ENCODE measurements at regions of chrX and their contacts with region 1.

Region 1: GRCh38 chrX:130097507-130098209 is 12.6 kb downstream of the ELF4 start:
- DNase-seq: peak; percentile 74 to 84
- H3K4me3 ChIP-seq: no peak overlapping the region; the same call in 1 of the 2 replicates
- H3K27ac ChIP-seq: peak overlapping the region; percentile 57
- H3K4me1 ChIP-seq: peaks cover 74% of the 10 kb centered on the region
- H3K27me3 ChIP-seq: no peaks in the 10 kb centered on the region
- CTCF ChIP-seq: no peak

Region 2: GRCh38 chrX:130039847-130040246 is 57.8 kb before region 1 on chrX:
- CTCF ChIA-PET with region 1: no interaction called
- POLR2A ChIA-PET with region 1: no interaction called
- intact Hi-C with region 1: no loop called
- DNase-seq: no peak
- H3K4me3 ChIP-seq: no peak overlapping the region
- H3K27ac ChIP-seq: no peak overlapping the region
- H3K4me1 ChIP-seq: no peaks in the 10 kb centered on the region
- H3K27me3 ChIP-seq: no peaks in the 10 kb centered on the region
- CTCF ChIP-seq: no peak

Region 3: GRCh38 chrX:130120746-130121504 is 23.3 kb after region 1 on chrX:
- CTCF ChIA-PET with region 1: interaction called, 14 read pairs
- POLR2A ChIA-PET with region 1: no interaction called
- intact Hi-C with region 1: no loop called
- DNase-seq: peak; percentile 71 to 79
- H3K4me3 ChIP-seq: peak overlapping the region; percentile 51; the same call in 1 of the 2 replicates
- H3K27ac ChIP-seq: peak overlapping the region; percentile 66
- H3K4me1 ChIP-seq: peaks cover 75% of the 10 kb centered on the region
- H3K27me3 ChIP-seq: no peaks in the 10 kb centered on the region
- CTCF ChIP-seq: peak; percentile 75

Region 4: GRCh38 chrX:130139474-130140201 is 42.0 kb after region 1 on chrX:
- CTCF ChIA-PET with region 1: no interaction called
- POLR2A ChIA-PET with region 1: no interaction called
- intact Hi-C with region 1: no loop called
- DNase-seq: no peak
- H3K4me3 ChIP-seq: no peak overlapping the region
- H3K27ac ChIP-seq: no peak overlapping the region
- H3K4me1 ChIP-seq: no peaks in the 10 kb centered on the region
- H3K27me3 ChIP-seq: no peaks in the 10 kb centered on the region
- CTCF ChIP-seq: no peak